B cell (primary cell): ENCODE measurements at regions of chrX and their contacts with region 1.

Region 1: GRCh38 chrX:47650164-47651042 is at the start of gene ELK1:
- DNase-seq: peak; percentile 94
- ATAC-seq: peak; percentile 91
- H3K4me3 ChIP-seq: peak within 1 kb of the TSS in 4 of 5 experiments; percentile 68 to 77 (median 75)
- H3K4me3 Mint-ChIP-seq: peak within 1 kb of the TSS; percentile 93
- H3K27ac ChIP-seq: peak within 1 kb of the TSS; percentile 69 to 73
- H3K27ac Mint-ChIP-seq: peak within 1 kb of the TSS; percentile 94
- H3K4me1 ChIP-seq: peaks cover 11 to 26% of the 10 kb centered on the region in 2 donors
- H3K4me1 Mint-ChIP-seq: peaks cover 29% of the 10 kb centered on the region
- H3K27me3 ChIP-seq: no peaks in the 10 kb centered on the region
- H3K27me3 Mint-ChIP-seq: no peaks in the 10 kb centered on the region
- CTCF ChIP-seq: no peak
- total RNA-seq, gene ELK1: 20.8 and 22.7 TPM in 2 replicates

Region 2: GRCh38 chrX:47828984-47829383 is 178.6 kb after region 1 on chrX:
- CTCF ChIA-PET with region 1: no interaction called
- POLR2A ChIA-PET with region 1: no interaction called
- intact Hi-C with region 1: no loop called
- DNase-seq: no peak
- ATAC-seq: no peak
- H3K4me3 ChIP-seq: no peak overlapping the region
- H3K4me3 Mint-ChIP-seq: no peak overlapping the region
- H3K27ac ChIP-seq: no peak overlapping the region
- H3K27ac Mint-ChIP-seq: no peak overlapping the region
- H3K4me1 ChIP-seq: no peaks in the 10 kb centered on the region
- H3K4me1 Mint-ChIP-seq: no peaks in the 10 kb centered on the region
- H3K27me3 ChIP-seq: no peaks in the 10 kb centered on the region
- H3K27me3 Mint-ChIP-seq: no peaks in the 10 kb centered on the region
- CTCF ChIP-seq: no peak

Region 3: GRCh38 chrX:49120099-49120498 is 1469.7 kb after region 1 on chrX:
- CTCF ChIA-PET with region 1: no interaction called
- POLR2A ChIA-PET with region 1: no interaction called
- intact Hi-C with region 1: loop called (anchors 10 kb)
- DNase-seq: no peak
- ATAC-seq: no peak
- H3K4me3 ChIP-seq: no peak overlapping the region
- H3K4me3 Mint-ChIP-seq: peak overlapping the region; percentile 0
- H3K27ac ChIP-seq: no peak overlapping the region
- H3K27ac Mint-ChIP-seq: no peak overlapping the region
- H3K4me1 ChIP-seq: peaks cover 4 to 18% of the 10 kb centered on the region in 2 donors
- H3K4me1 Mint-ChIP-seq: peaks cover 29% of the 10 kb centered on the region
- H3K27me3 ChIP-seq: no peaks in the 10 kb centered on the region
- H3K27me3 Mint-ChIP-seq: no peaks in the 10 kb centered on the region
- CTCF ChIP-seq: no peak